BJ (cell line): ENCODE measurements at regions of chr11 and their contacts with region 1.

Region 1: DNA sequence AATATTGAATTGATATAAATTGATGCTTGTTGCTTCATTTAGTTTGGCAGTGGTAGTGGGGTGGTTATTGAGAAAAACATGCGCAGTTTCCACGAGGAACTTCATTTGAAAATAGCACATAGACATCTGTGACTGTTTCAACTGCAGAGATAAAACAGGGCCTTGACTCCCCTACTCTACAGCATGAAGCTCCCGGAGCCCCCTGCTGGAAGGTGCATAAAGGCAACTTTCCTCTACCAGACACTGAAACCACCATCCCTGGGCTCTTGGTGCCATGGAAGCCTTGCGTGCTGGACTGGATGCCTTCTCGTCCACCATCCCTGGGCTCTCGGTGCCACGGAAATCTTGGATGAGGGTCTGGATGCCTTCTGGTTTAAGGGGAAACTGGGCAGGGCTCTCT is 195.9 kb downstream of the CSNK2A3 start:
- DNase-seq: no peak
- H3K4me3 ChIP-seq: no peak overlapping the region
- H3K27me3 ChIP-seq: no peaks in the 10 kb centered on the region; the same call in none of the 2 replicates
- CTCF ChIP-seq: peak; percentile 66

Region 2: GRCh38 chr11:11028017-11028692 is 129.0 kb before region 1 on chr11:
- CTCF ChIA-PET with region 1: interaction called, 26 read pairs
- POLR2A ChIA-PET with region 1: no interaction called
- DNase-seq: no peak
- H3K4me3 ChIP-seq: no peak overlapping the region
- H3K27me3 ChIP-seq: no peaks in the 10 kb centered on the region
- CTCF ChIP-seq: peak; percentile 85

Region 3: DNA sequence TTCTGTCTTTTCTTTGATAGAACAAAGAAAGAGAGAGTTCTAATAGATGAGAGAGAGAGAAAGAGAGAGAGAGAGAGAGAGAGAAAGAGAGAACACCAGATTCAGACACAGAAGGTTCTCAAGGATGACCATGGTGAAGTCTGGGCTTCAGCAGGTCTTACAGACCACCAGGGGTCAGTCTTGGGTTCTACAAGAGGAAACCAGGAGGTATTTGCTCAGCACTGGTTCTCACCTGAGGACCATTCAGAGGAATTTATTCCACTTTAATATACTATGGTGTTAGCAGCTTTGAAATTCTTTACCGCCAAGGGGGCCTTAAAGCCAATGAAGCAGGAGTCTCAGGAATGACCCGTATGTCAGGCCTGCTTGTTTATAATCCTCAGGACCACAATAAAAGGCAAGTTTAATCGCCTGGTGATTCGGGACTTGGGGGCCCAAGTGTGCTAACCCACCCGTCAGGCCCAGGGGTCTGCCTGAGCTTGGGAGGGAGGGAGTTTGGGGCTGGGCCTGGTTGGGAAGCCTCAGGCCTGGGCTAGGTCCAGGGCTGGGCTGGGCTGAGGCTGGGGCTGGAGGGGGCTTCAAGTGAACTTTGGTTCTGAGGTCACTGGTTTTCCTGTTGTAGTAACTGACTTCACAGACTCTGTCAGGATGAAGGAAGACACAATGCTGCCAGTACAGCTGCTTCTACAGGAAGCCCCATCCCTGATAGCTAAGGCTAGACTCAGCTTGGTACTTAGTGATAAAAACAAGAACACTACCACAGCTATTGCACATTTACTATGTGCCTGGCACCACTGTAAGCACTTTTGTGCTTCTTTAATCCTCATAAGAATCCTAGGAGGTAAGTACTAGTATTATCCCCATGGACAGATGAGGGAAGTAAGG is 120.1 kb before region 1 on chr11:
- CTCF ChIA-PET with region 1: interaction called, 35 read pairs
- POLR2A ChIA-PET with region 1: no interaction called
- DNase-seq: no peak
- H3K4me3 ChIP-seq: no peak overlapping the region
- H3K27me3 ChIP-seq: peaks cover 1% of the 10 kb centered on the region
- CTCF ChIP-seq: peak; percentile 61

Region 4: DNA sequence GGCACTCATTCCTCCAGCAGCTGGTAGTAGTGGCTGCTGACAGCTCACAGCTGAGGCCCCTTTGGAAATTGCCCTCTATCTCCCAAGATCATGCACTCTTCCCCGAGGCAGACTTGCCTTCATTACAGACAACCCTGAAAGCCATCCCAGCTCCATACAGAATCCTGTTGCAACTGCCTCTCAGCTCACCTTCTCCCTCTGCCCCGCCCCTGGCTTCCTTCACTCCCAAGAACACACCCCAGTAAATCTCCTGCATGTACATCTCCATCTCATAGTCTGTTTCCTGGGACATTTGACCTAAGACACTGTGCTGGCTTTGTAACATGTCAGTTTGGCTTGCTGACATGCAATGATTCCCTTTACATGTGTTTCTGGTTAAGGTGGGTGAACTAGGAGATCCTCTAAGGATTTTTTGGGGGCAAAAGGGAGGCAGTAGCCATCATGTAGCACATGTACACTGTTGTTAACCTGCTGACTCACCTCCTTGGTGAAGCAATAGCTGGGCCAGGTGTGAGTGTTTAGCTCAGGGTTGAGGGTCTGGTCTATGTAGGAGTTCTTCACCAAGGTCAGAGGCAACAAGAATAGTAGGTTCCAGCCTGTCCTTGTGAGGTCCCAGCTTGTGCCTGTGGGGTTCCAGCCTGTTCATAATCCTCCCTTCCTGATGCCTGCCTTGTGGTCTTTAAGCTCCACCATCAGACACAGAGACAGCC is 16.3 kb after region 1 on chr11:
- CTCF ChIA-PET with region 1: interaction called, 15 read pairs
- POLR2A ChIA-PET with region 1: no interaction called
- DNase-seq: no peak
- H3K4me3 ChIP-seq: no peak overlapping the region
- H3K27me3 ChIP-seq: no peaks in the 10 kb centered on the region; the same call in none of the 2 replicates
- CTCF ChIP-seq: no peak